Naive thymus-derived CD4-positive, alpha-beta T cell (primary cell): ENCODE measurements at regions of chr12 and their contacts with region 1.

Region 1: GRCh38 chr12:96906849-96907670 is at the start of gene NEDD1:
- DNase-seq: peak; percentile 70 to 89 (median 81)
- ATAC-seq: peak; percentile 90
- H3K4me3 ChIP-seq: peak within 1 kb of the TSS; percentile 84
- H3K4me3 Mint-ChIP-seq: peak within 1 kb of the TSS; percentile 89 to 97 (median 95)
- H3K27ac ChIP-seq: peak within 1 kb of the TSS; percentile 99
- H3K27ac Mint-ChIP-seq: peak within 1 kb of the TSS; percentile 96 to 99 (median 98)
- H3K4me1 ChIP-seq: peaks cover 0 to 12% of the 10 kb centered on the region in 2 donors
- H3K4me1 Mint-ChIP-seq: peaks cover 21 to 53% (median 47%) of the 10 kb centered on the region in 7 donors
- H3K27me3 ChIP-seq: no peaks in the 10 kb centered on the region
- H3K27me3 Mint-ChIP-seq: peaks cover 0 to 12% (median 0%) of the 10 kb centered on the region in 5 donors
- total RNA-seq, gene NEDD1: 18.3 to 52.4 (median 23.2) TPM

Region 2: DNA sequence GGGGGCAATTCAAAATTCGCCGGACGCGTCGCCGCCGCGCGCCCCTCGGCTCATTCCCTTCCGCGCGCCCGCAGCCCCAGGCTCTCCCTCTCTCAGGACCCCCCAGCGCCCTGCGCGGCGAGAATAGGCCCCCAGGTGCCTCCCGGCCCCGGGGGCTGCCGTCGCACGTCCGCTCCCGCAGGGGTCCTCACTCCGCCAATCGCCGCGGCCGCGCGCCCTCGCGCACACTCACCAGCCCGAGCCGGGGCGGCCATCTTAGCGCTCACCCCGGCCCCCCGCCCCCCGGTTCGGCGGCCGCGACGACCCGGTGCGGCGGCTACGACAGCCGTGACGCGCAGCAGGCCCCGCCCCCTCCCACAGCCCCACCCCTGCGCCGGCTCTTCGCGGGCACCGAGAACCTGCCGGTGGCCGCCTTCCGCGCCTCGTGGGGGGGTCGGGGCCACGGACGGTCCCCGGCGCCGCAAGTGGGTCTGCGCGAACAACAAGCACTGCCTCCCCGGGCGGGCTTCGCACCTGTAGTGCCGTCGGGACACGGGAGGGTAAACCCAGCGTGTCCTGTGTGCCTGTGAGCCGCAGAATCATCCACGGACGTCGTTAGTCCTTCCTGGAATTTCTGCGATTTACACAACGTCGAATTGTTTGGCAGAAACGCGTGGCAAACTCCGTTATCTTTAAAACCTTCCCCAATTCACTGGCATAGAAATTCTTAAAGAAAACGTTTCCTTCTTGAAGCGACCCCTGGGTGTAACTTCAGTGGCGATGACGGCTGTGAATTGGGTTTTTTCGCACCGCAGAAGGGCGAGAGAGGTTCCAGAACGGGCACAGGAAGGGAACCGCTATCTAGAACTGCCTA is 1358.3 kb before region 1 on chr12:
- CTCF ChIA-PET with region 1: no interaction called
- POLR2A ChIA-PET with region 1: no interaction called
- intact Hi-C with region 1: loop called (anchors 5 kb)
- DNase-seq: peak; percentile 66 to 81 (median 77)
- ATAC-seq: peak; percentile 94
- H3K4me3 ChIP-seq: peak overlapping the region; percentile 75
- H3K4me3 Mint-ChIP-seq: peak overlapping the region; percentile 89 to 96 (median 94)
- H3K27ac ChIP-seq: peak overlapping the region; percentile 96
- H3K27ac Mint-ChIP-seq: peak overlapping the region; percentile 70 to 98 (median 94)
- H3K4me1 ChIP-seq: peaks cover 6 to 23% of the 10 kb centered on the region in 2 donors
- H3K4me1 Mint-ChIP-seq: peaks cover 36 to 73% (median 61%) of the 10 kb centered on the region in 7 donors
- H3K27me3 ChIP-seq: no peaks in the 10 kb centered on the region
- H3K27me3 Mint-ChIP-seq: peaks cover 0 to 22% (median 7%) of the 10 kb centered on the region in 5 donors

Region 3: GRCh38 chr12:96035278-96036236 is 871.5 kb before region 1 on chr12 and contains the start of gene LTA4H:
- CTCF ChIA-PET with region 1: no interaction called
- POLR2A ChIA-PET with region 1: interaction called, 3 read pairs
- intact Hi-C with region 1: loop called (anchors 1 to 2 kb)
- DNase-seq: peak; percentile 86 to 99 (median 97)
- ATAC-seq: peak; percentile 97
- H3K4me3 ChIP-seq: peak within 1 kb of the TSS; percentile 85
- H3K4me3 Mint-ChIP-seq: no peak within 1 kb of the TSS
- H3K27ac ChIP-seq: peak within 1 kb of the TSS; percentile 81
- H3K27ac Mint-ChIP-seq: no peak within 1 kb of the TSS
- H3K4me1 ChIP-seq: peaks cover 4 to 9% of the 10 kb centered on the region in 2 donors
- H3K4me1 Mint-ChIP-seq: peaks cover 5 to 19% (median 17%) of the 10 kb centered on the region in 7 donors
- H3K27me3 ChIP-seq: no peaks in the 10 kb centered on the region
- H3K27me3 Mint-ChIP-seq: no peaks in the 10 kb centered on the region
- total RNA-seq, gene LTA4H: 52.5 to 151 (median 63.4) TPM

Region 4: GRCh38 chr12:96578526-96579125 is 328.4 kb before region 1 on chr12:
- CTCF ChIA-PET with region 1: no interaction called
- POLR2A ChIA-PET with region 1: interaction called, 3 read pairs
- intact Hi-C with region 1: loop called in 1 of 2 experiments (anchors 10 kb)
- DNase-seq: peak in 7 of 9 donors; percentile 26 to 62 (median 52)
- ATAC-seq: peak; percentile 84
- H3K4me3 ChIP-seq: no peak overlapping the region
- H3K4me3 Mint-ChIP-seq: no peak overlapping the region
- H3K27ac ChIP-seq: no peak overlapping the region
- H3K27ac Mint-ChIP-seq: no peak overlapping the region
- H3K4me1 ChIP-seq: no peaks in the 10 kb centered on the region
- H3K4me1 Mint-ChIP-seq: peaks cover 0 to 3% (median 0%) of the 10 kb centered on the region in 7 donors
- H3K27me3 ChIP-seq: no peaks in the 10 kb centered on the region
- H3K27me3 Mint-ChIP-seq: peaks cover 0 to 12% (median 5%) of the 10 kb centered on the region in 5 donors

Region 5: GRCh38 chr12:98397316-98398105 is 1490.5 kb after region 1 on chr12:
- CTCF ChIA-PET with region 1: no interaction called
- POLR2A ChIA-PET with region 1: no interaction called
- intact Hi-C with region 1: loop called (anchors 2 to 10 kb)
- DNase-seq: peak; percentile 65 to 81 (median 78)
- ATAC-seq: peak; percentile 98
- H3K4me3 ChIP-seq: peak overlapping the region; percentile 76
- H3K4me3 Mint-ChIP-seq: peak overlapping the region; percentile 79 to 89 (median 86)
- H3K27ac ChIP-seq: peak overlapping the region; percentile 11
- H3K27ac Mint-ChIP-seq: peak overlapping the region; percentile 3 to 84 (median 58)
- H3K4me1 ChIP-seq: peaks cover 0 to 11% of the 10 kb centered on the region in 2 donors
- H3K4me1 Mint-ChIP-seq: peaks cover 11 to 31% (median 17%) of the 10 kb centered on the region in 7 donors
- H3K27me3 ChIP-seq: no peaks in the 10 kb centered on the region
- H3K27me3 Mint-ChIP-seq: peaks cover 0 to 7% (median 0%) of the 10 kb centered on the region in 5 donors

Region 6: GRCh38 chr12:98593351-98594049 is 1686.4 kb after region 1 on chr12 and contains the start of gene SLC25A3:
- CTCF ChIA-PET with region 1: no interaction called
- POLR2A ChIA-PET with region 1: no interaction called
- intact Hi-C with region 1: loop called (anchors 1 to 2 kb)
- DNase-seq: peak; percentile 79 to 96 (median 92)
- ATAC-seq: peak; percentile 98
- H3K4me3 ChIP-seq: peak within 1 kb of the TSS; percentile 80
- H3K4me3 Mint-ChIP-seq: peak within 1 kb of the TSS; percentile 88 to 99 (median 96)
- H3K27ac ChIP-seq: peak within 1 kb of the TSS; percentile 95
- H3K27ac Mint-ChIP-seq: peak within 1 kb of the TSS; percentile 98 to 100 (median 99)
- H3K4me1 ChIP-seq: peaks cover 17 to 22% of the 10 kb centered on the region in 2 donors
- H3K4me1 Mint-ChIP-seq: peaks cover 20 to 48% (median 36%) of the 10 kb centered on the region in 7 donors
- H3K27me3 ChIP-seq: no peaks in the 10 kb centered on the region
- H3K27me3 Mint-ChIP-seq: peaks cover 0 to 2% (median 0%) of the 10 kb centered on the region in 5 donors
- total RNA-seq, gene SLC25A3: 234 to 448 (median 353) TPM